CD4-positive, alpha-beta T cell (primary cell): ENCODE measurements at regions of chr12 and their contacts with region 1.

Region 1: GRCh38 chr12:95810411-95810810 is 19.8 kb upstream of the NTN4 start:
- DNase-seq: no peak
- ATAC-seq: no peak
- H3K4me3 ChIP-seq: no peak overlapping the region
- H3K4me3 Mint-ChIP-seq: no peak overlapping the region
- H3K27ac ChIP-seq: no peak overlapping the region
- H3K27ac Mint-ChIP-seq: no peak overlapping the region
- H3K4me1 ChIP-seq: peaks cover 6% of the 10 kb centered on the region
- H3K4me1 Mint-ChIP-seq: no peaks in the 10 kb centered on the region
- H3K27me3 ChIP-seq: peaks cover 2 to 10% of the 10 kb centered on the region in 2 experiments
- H3K27me3 Mint-ChIP-seq: peaks cover 58% of the 10 kb centered on the region
- CTCF ChIP-seq: no peak

Region 2: DNA sequence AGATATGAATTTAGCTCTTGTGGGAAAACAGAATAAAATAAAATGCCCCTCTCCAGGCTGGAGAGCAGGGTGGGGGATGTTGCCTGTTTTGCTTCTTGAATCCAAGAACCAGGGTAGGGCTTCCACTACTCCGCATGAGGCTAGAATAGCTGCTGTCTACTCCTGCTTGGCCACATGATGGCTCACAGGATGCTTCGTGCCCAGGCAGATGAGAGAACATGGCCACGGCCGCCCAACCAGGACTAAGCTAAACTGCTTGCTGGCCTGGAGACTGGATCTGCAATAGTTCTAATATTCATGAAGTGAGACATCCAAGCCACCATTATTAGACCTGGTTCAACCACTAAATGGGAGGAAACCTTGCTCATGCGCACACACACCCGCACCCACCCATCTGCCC is 458.7 kb before region 1 on chr12:
- CTCF ChIA-PET with region 1: no interaction called
- POLR2A ChIA-PET with region 1: no interaction called
- intact Hi-C with region 1: no loop called
- DNase-seq: no peak
- ATAC-seq: no peak
- H3K4me3 ChIP-seq: no peak overlapping the region
- H3K4me3 Mint-ChIP-seq: no peak overlapping the region
- H3K27ac ChIP-seq: no peak overlapping the region
- H3K27ac Mint-ChIP-seq: no peak overlapping the region
- H3K4me1 ChIP-seq: no peaks in the 10 kb centered on the region
- H3K4me1 Mint-ChIP-seq: no peaks in the 10 kb centered on the region
- H3K27me3 ChIP-seq: no peaks in the 10 kb centered on the region
- H3K27me3 Mint-ChIP-seq: no peaks in the 10 kb centered on the region
- CTCF ChIP-seq: no peak

Region 3: GRCh38 chr12:95623585-95624042 is 186.8 kb before region 1 on chr12:
- CTCF ChIA-PET with region 1: no interaction called
- POLR2A ChIA-PET with region 1: no interaction called
- intact Hi-C with region 1: loop called in 1 of 2 experiments (anchors 5 kb)
- DNase-seq: peak in 7 of 14 experiments; percentile 1 to 57 (median 24)
- ATAC-seq: no peak
- H3K4me3 ChIP-seq: no peak overlapping the region
- H3K4me3 Mint-ChIP-seq: no peak overlapping the region
- H3K27ac ChIP-seq: no peak overlapping the region
- H3K27ac Mint-ChIP-seq: no peak overlapping the region
- H3K4me1 ChIP-seq: peaks cover 2% of the 10 kb centered on the region
- H3K4me1 Mint-ChIP-seq: no peaks in the 10 kb centered on the region
- H3K27me3 ChIP-seq: no peaks in the 10 kb centered on the region
- H3K27me3 Mint-ChIP-seq: peaks cover 27% of the 10 kb centered on the region
- CTCF ChIP-seq: no peak

Region 4: GRCh38 chr12:95858479-95859343 is 48.3 kb after region 1 on chr12 and contains the start of gene SNRPF:
- CTCF ChIA-PET with region 1: no interaction called
- POLR2A ChIA-PET with region 1: no interaction called
- intact Hi-C with region 1: no loop called
- DNase-seq: peak; percentile 84 to 97 (median 91)
- ATAC-seq: peak; percentile 93
- H3K4me3 ChIP-seq: peak within 1 kb of the TSS; percentile 83
- H3K4me3 Mint-ChIP-seq: no peak within 1 kb of the TSS
- H3K27ac ChIP-seq: peak within 1 kb of the TSS; percentile 49 to 89
- H3K27ac Mint-ChIP-seq: no peak within 1 kb of the TSS
- H3K4me1 ChIP-seq: peaks cover 26% of the 10 kb centered on the region
- H3K4me1 Mint-ChIP-seq: peaks cover 12% of the 10 kb centered on the region
- H3K27me3 ChIP-seq: no peaks in the 10 kb centered on the region
- H3K27me3 Mint-ChIP-seq: peaks cover 4% of the 10 kb centered on the region
- CTCF ChIP-seq: no peak
- total RNA-seq, gene SNRPF: 40.9 to 44.0 TPM